Breast epithelium (tissue), 4 donors: ENCODE measurements at regions of chr6 and their contacts with region 1.

Region 1: DNA sequence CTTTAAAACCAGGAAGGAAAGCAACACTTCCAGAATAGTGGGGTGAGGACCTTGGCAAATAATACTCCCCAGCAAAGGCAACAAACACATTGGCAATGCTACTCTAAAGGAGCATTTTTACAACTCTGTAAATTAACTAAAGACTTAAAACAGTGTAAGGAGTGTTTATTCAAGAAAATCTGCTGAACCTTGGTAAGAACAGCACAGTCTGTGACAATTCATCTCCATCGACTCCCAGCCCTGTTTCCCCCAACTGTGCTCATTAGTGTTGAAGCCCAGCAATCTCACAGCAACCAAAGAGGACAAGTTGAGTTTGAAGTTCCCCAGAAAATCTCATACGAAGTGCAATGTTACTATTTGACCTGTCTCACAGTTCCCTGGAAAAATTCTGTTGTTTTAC is 884.9 kb downstream of the C6orf118 start:
- DNase-seq: no peak
- H3K4me3 ChIP-seq: no peak overlapping the region
- H3K27ac ChIP-seq: no peak overlapping the region
- H3K4me1 ChIP-seq: no peaks in the 10 kb centered on the region
- H3K27me3 ChIP-seq: no peaks in the 10 kb centered on the region
- CTCF ChIP-seq: no peak
- POLR2A ChIP-seq: no peak

Region 2: DNA sequence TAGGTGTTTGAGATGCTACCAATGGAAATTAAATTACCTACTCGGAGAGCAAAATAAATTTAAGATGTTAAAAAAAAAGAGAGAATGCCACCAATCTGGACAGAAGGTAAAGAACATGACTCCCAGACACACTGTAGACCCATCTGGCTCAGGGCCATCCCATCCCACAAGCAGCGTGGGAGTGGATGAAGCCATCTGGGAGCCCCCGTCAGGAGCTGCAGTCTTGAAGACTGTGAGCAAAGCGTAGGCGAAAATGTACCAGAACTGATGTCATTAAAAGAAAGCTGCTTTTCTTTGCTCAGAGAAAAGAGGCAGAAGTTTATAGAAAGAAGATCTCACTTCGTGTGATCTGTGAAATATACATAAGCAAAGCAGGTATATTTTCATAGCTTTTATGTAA is 194.2 kb before region 1 on chr6:
- intact Hi-C with region 1: loop called (anchors 5 kb)
- DNase-seq: no peak
- H3K4me3 ChIP-seq: no peak overlapping the region
- H3K27ac ChIP-seq: no peak overlapping the region
- H3K4me1 ChIP-seq: no peaks in the 10 kb centered on the region
- H3K27me3 ChIP-seq: no peaks in the 10 kb centered on the region
- CTCF ChIP-seq: no peak
- POLR2A ChIP-seq: no peak